Ovary (tissue), 10 donors: ENCODE measurements at regions of chr9 and their contacts with region 1.

Region 1: DNA sequence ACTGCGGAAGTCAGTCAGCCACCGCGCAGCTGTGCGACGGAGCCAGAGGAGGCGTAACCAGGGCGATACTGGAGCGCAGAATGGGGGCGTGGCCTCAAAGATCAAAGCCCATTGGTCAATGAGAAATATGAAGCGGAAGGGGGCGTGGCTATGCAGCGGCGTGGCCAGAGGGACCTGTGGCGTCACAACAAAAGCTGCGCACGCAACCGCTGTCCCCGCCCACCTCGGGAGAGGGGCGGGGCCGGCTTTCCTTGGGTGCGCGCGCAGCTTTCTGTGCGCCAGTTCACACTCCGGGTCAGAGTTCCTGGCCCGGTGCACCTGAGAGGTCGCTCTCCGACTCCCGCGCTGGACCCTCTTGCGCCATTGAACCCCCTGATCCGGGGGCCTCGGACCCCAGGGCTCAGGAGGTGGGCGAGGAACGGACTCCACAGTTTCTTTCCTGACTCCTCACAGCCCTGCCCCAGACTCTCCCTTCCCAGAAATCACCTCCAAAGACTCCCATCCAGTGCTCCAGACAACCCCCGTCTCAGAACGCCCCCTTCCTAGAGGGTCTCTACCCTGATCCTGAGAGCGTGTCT is at the starts of genes GOLGA2 and SWI5:
- DNase-seq: peak; percentile 100
- H3K4me3 ChIP-seq: peak within 1 kb of the TSS; percentile 93
- H3K27ac ChIP-seq: peak within 1 kb of the TSS; percentile 62 to 85
- H3K4me1 ChIP-seq: peaks cover 5% of the 10 kb centered on the region
- H3K27me3 ChIP-seq: no peaks in the 10 kb centered on the region
- CTCF ChIP-seq: no peak
- EP300 ChIP-seq: no peak
- POLR2A ChIP-seq: peak; percentile 91
- total RNA-seq, gene GOLGA2: 53.2 to 117 (median 107) TPM
- total RNA-seq, gene SWI5: 22.4 to 48.9 (median 29.5) TPM

Region 2: DNA sequence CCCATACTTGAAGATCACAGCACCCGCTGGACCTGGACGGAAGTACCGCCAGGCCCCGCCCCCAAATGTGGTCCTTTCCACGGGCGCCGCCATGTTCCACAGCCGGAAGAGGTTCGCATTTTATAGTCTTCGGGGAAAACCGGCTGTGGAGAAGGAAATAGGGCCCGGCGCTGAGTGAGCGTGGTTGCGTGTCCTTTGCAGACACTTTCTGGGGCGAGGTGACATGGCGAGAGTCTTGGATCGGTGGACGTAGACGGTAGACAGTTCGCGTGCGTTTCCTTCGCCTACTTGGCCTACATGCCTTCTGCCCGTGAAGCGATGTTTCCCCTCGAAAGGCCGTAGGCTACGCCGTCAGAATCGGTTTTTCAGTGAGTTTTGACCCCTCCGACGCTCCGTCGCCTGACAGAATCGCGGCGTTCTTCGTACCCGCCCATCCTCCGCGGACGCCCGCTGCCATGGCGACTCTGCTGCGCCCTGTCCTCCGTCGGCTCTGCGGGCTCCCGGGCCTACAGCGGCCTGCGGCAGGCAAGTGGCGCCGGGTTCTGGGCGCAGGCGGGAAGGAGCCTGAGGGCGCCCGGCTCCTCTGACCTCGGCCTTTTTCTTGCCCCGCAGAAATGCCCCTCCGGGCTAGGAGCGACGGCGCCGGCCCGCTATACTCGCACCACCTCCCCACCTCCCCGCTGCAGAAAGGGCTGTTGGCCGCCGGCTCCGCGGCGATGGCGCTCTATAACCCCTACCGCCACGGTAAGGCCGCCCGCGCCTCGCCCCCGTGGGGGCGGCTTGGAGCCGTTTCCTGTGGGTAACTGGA is 46.5 kb after region 1 on chr9 and contains the starts of genes COQ4 and TRUB2:
- intact Hi-C with region 1: loop called in 1 of 4 experiments (anchors 5 kb)
- DNase-seq: peak; percentile 91 to 94 (median 92)
- H3K4me3 ChIP-seq: peak within 1 kb of the TSS; percentile 86
- H3K27ac ChIP-seq: peak within 1 kb of the TSS; percentile 19 to 78
- H3K4me1 ChIP-seq: peaks cover 8% of the 10 kb centered on the region
- H3K27me3 ChIP-seq: no peaks in the 10 kb centered on the region
- CTCF ChIP-seq: peak in 1 of 3 donors; percentile 9
- EP300 ChIP-seq: peak; percentile 47
- POLR2A ChIP-seq: no peak
- total RNA-seq, gene COQ4: 24.4 to 75.7 (median 34.2) TPM
- total RNA-seq, gene TRUB2: 4.6 to 29.4 (median 19.7) TPM

Region 3: DNA sequence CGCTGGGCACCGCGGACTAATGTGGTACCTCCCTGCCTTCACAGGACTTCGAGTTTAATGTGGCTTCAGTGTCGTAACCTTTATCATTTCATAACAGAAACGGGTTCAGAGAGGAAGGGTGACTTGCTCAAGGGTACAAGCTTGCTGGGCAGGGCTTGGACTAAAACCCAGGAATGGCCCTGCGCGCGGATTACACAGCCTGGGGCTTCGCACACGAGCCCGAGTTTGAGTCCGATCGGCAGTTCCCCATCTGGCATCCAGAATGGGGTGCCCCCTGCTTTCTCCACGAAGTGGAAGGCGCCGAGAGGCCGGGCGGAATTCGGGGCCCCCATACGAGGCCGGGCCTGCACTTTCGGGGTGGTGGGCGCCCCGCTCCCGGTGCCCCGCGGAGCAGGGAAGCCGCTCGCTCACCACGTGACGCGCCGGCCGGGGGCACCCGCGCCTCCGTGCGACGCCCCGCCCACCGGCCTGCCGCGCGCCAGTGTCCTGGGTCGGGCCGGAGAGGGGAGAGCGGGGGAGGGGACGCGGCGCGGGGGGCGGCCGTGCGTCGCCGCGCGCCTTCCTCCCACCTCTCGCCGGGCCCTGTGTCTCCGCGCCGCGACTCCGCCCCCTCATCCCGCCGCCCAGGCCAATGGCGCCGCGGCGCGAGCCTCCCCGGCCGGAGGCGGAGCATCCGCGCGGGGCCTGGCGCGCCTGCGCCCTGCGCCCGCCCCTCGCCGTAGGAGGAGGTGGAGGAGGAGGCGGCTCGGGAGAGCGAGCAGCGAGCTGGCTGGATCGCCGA is 412.6 kb after region 1 on chr9 and contains the start of gene SET:
- intact Hi-C with region 1: no loop called
- DNase-seq: peak; percentile 95 to 97 (median 96)
- H3K4me3 ChIP-seq: peak within 1 kb of the TSS; percentile 83
- H3K27ac ChIP-seq: peak within 1 kb of the TSS; percentile 97 to 100
- H3K4me1 ChIP-seq: peaks cover 6% of the 10 kb centered on the region
- H3K27me3 ChIP-seq: no peaks in the 10 kb centered on the region
- CTCF ChIP-seq: no peak
- EP300 ChIP-seq: no peak
- POLR2A ChIP-seq: peak; percentile 94
- total RNA-seq, gene SET: 119 to 328 (median 291) TPM